Activated B cell treated with CpG ODN at 0.5 μM for 24 hours (primary cell): ENCODE measurements at regions of chr20 and their contacts with region 1.

Region 1: DNA sequence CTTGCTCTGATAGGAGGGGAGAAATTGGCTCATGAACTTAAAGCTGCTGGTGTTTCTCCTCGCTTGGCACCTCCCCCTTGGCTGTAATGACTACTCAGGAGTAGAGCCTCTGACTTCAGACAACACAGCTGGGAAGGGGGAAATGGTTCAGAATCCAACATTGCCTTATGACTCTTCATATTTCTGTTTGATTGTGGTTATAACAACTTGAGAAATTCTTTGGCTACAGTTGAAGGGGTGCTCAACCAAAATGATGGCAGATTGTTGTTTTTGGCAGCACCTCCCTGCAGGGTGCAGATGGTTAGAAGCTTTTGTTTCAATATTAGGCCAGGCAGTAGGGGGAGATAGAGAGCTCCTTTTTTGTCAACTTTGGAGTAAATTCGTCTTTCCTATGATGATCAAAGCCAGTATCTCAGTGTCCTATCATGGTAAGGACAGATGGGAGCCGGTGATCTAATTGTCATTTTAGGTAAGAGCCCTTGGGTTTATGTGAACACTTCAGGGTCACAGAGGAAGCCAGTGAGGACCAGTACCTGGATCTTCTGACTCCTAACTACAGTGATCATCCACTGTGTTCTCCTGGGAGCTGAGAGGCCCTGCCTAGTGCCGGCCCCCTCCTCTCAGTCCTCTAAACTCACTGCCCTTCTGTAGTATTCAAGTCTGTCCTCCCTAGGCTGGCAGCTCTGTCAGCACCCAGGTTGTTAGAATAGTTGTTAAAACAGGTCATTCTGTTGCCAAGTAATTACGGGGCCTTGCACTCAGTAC is 39.9 kb downstream of the RPRD1B start:
- DNase-seq: no peak
- ATAC-seq: peak; percentile 55
- H3K4me3 Mint-ChIP-seq: peak overlapping the region; percentile 22
- H3K27ac Mint-ChIP-seq: peak overlapping the region; percentile 65
- H3K4me1 Mint-ChIP-seq: peaks cover 56% of the 10 kb centered on the region
- H3K27me3 Mint-ChIP-seq: no peaks in the 10 kb centered on the region
- CTCF ChIP-seq: peak; percentile 34

Region 2: DNA sequence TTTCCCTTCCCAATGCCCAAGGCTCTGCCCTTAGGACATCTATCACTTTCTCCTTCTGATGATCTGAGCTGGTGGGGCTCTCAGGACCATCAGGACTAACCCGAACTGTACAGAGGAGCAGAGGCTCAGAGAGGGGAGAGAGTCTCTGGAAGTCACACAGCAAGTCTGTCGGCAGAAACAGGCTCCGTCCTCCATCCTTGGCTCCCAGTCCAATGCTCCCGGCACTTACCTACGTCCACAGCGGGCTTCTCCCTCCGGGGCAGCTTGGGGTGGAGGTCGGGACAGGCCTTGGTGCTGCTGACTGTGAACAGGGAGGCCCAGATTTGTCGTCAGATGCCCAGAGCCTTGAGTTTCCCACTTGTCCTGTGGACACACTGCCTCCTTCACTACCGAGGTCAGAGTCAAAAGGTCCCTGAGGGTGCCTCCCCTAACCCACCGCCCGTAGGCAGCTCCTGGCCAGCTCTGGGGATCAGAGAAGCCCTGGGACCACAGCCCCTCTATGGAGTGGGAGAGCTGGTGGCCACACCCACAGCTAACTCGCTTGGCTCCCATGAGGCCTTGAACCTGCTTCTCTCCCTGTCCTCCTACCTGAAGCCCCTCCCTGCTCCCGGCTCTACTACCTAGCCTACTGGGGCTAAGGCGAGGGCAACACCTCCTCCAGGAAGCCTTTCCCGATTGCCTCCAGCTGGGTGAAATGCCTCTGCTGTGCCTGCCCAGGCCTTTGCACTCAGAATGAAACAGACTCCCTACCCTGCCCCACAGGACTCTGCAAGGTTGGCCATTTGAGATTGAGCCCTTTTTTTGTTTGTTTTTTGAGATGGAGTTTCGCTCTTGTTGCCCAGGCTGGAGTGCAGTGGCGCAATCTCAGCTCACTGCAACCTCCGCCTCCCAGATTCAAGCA is 148.0 kb before region 1 on chr20:
- CTCF ChIA-PET with region 1: no interaction called
- POLR2A ChIA-PET with region 1: no interaction called
- intact Hi-C with region 1: no loop called
- DNase-seq: no peak
- ATAC-seq: no peak
- H3K4me3 Mint-ChIP-seq: no peak overlapping the region
- H3K27ac Mint-ChIP-seq: no peak overlapping the region
- H3K4me1 Mint-ChIP-seq: peaks cover 13% of the 10 kb centered on the region
- H3K27me3 Mint-ChIP-seq: peaks cover 8% of the 10 kb centered on the region
- CTCF ChIP-seq: no peak

Region 3: GRCh38 chr20:38094373-38094891 is 20.9 kb after region 1 on chr20:
- CTCF ChIA-PET with region 1: interaction called, 101 read pairs
- POLR2A ChIA-PET with region 1: interaction called, 149 read pairs
- intact Hi-C with region 1: loop called (anchors 1 kb)
- DNase-seq: no peak
- ATAC-seq: peak; percentile 70
- H3K4me3 Mint-ChIP-seq: peak overlapping the region; percentile 71
- H3K27ac Mint-ChIP-seq: peak overlapping the region; percentile 96
- H3K4me1 Mint-ChIP-seq: peaks cover 87% of the 10 kb centered on the region
- H3K27me3 Mint-ChIP-seq: no peaks in the 10 kb centered on the region
- CTCF ChIP-seq: no peak

Region 4: GRCh38 chr20:38113401-38114325 is 40.2 kb after region 1 on chr20:
- CTCF ChIA-PET with region 1: interaction called, 51 read pairs
- POLR2A ChIA-PET with region 1: no interaction called
- intact Hi-C with region 1: loop called (anchors 1 kb)
- DNase-seq: no peak
- ATAC-seq: peak; percentile 40
- H3K4me3 Mint-ChIP-seq: no peak overlapping the region
- H3K27ac Mint-ChIP-seq: no peak overlapping the region
- H3K4me1 Mint-ChIP-seq: peaks cover 6% of the 10 kb centered on the region
- H3K27me3 Mint-ChIP-seq: no peaks in the 10 kb centered on the region
- CTCF ChIP-seq: no peak

Region 5: DNA sequence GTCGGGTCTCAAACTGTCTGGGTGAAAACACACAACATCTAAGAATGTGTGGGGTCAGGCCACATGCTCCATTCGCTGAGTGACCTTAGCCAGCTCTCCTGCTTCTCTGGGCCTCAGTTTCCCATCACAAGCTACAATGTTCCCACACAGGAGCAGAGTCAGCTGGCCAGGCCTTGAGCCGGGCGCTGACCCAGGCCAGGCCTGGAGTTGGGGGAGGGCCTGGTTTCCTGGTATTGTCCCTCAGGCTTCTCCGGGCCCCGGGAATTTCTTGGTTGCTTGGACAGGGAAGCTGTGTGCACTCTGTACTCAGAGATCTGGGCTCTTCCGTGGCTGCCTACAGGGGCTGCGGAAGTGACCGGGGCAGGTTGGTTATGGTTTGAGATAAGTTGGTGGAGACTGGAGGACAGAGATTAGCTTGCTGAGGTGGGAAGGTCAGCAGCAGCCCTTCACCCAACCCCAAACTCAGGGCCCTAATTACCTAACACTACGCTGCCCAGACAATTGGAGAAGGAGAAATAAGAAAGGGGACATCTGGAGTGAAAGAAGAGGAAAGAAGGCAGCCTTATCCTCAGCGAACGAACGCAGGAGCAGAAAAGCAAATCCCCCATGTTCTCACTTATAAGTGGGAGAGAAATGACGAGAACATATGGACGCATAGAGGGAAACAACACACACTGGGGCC is 85.3 kb after region 1 on chr20:
- CTCF ChIA-PET with region 1: interaction called, 40 read pairs
- POLR2A ChIA-PET with region 1: interaction called, 6 read pairs
- intact Hi-C with region 1: no loop called
- DNase-seq: no peak
- ATAC-seq: no peak
- H3K4me3 Mint-ChIP-seq: no peak overlapping the region
- H3K27ac Mint-ChIP-seq: no peak overlapping the region
- H3K4me1 Mint-ChIP-seq: peaks cover 8% of the 10 kb centered on the region
- H3K27me3 Mint-ChIP-seq: no peaks in the 10 kb centered on the region
- CTCF ChIP-seq: no peak

Region 6: DNA sequence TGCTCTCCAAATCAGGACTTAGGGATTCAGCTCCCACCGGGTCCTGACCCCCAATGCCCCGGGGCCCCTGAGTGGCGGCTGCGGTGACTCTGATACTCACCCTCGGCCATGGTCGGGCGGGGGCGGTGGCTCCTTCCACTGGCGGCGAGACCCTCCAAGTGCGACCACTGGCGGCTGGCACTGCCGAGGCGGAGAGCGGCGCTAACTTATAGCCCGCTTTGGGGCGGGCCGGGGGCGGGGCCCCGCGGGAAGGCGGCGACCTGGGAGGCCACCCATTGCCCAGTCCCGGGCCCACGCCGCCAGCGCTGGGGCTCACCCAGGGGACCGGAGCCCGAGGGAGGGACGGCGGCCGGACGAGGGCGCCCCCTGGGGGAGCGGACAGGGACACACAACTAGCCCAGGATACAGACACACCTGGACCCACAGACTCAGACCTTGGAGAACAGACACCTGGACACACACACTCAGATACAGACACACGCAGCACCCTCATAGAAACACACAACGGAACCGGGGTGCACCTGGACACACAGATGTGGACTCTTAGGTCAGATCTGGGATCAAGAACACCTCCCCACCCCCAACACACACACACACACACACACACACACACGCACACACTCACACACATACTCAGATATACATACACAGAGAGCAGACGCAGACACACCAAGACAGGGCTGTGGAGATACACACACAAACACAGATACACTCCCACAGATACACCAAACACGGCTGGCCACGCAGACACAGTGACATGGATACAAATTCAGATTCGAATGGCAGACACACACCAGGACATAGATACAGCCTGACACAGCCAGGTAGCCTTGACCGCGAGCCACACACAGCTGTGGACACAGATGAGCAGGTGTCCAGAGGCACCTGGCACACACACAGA is 91.8 kb after region 1 on chr20 and contains the start of gene TGM2:
- CTCF ChIA-PET with region 1: interaction called, 40 read pairs
- POLR2A ChIA-PET with region 1: interaction called, 5 read pairs
- intact Hi-C with region 1: loop called (anchors 1 kb)
- DNase-seq: peak; percentile 74
- ATAC-seq: peak; percentile 94
- H3K4me3 Mint-ChIP-seq: peak within 1 kb of the TSS; percentile 75
- H3K27ac Mint-ChIP-seq: no peak within 1 kb of the TSS
- H3K4me1 Mint-ChIP-seq: peaks cover 29% of the 10 kb centered on the region
- H3K27me3 Mint-ChIP-seq: no peaks in the 10 kb centered on the region
- CTCF ChIP-seq: no peak
- total RNA-seq, gene TGM2: 20.8 and 22.9 TPM in 2 replicates

Region 7: GRCh38 chr20:38229376-38230252 is 156.1 kb after region 1 on chr20:
- CTCF ChIA-PET with region 1: no interaction called
- POLR2A ChIA-PET with region 1: no interaction called
- intact Hi-C with region 1: no loop called
- DNase-seq: no peak
- ATAC-seq: no peak
- H3K4me3 Mint-ChIP-seq: no peak overlapping the region
- H3K27ac Mint-ChIP-seq: no peak overlapping the region
- H3K4me1 Mint-ChIP-seq: no peaks in the 10 kb centered on the region
- H3K27me3 Mint-ChIP-seq: peaks cover 8% of the 10 kb centered on the region
- CTCF ChIP-seq: no peak

Region 8: GRCh38 chr20:38336726-38337125 is 263.2 kb after region 1 on chr20:
- CTCF ChIA-PET with region 1: no interaction called
- POLR2A ChIA-PET with region 1: no interaction called
- intact Hi-C with region 1: no loop called
- DNase-seq: no peak
- ATAC-seq: no peak
- H3K4me3 Mint-ChIP-seq: no peak overlapping the region
- H3K27ac Mint-ChIP-seq: no peak overlapping the region
- H3K4me1 Mint-ChIP-seq: no peaks in the 10 kb centered on the region
- H3K27me3 Mint-ChIP-seq: peaks cover 22% of the 10 kb centered on the region
- CTCF ChIP-seq: no peak